ENCODE measurements at regions of chr6 and their contacts with region 1.

Region 1: DNA sequence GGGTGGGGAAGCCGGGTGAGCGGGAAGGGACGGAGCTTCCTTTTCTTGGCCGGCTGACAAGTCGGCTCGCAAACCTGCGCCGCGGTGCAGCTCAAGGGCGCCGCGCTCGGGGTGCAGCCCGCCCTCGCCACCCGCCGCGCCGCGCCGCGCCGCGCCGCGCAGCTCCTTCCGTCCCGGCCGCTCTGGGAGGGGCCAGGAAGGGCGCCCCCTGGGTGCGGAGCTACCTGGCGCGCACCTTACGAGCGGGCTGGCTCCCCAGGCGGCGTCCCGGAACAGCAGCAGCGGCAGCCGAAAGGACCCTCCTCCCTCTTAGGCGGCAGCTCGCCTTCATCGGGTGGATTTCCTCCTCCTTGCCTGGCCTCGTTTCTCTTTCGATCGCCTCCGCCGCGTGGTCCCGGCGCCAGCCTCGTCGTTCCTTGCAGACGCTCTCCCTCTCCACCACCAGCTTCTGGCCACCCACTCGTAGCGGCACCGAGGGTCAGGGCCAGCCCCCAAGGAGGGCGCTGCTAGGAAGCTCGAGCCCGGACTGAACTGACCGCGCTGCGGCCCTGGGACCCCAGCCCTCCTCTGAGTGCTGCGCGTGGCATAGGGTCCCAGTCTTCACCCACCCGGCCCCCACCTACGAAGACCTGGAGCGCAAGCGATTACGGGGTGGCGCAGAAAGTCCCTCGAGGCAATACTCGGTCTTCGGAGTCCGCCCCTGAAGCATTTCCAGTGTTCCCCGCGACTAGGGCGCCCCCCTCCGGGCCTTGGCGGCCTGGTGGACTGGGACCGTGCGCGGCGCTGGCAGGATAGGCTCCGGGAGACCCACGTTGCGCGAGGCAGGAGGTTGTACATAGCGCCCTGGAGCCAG is at the start of gene MAP3K5:
- DNase-seq: peak; percentile 97
- H3K4me3 Mint-ChIP-seq: peak within 1 kb of the TSS; percentile 94
- H3K27ac Mint-ChIP-seq: peak within 1 kb of the TSS; percentile 94
- H3K4me1 Mint-ChIP-seq: peaks cover 35% of the 10 kb centered on the region
- H3K27me3 Mint-ChIP-seq: no peaks in the 10 kb centered on the region
- total RNA-seq, gene MAP3K5: 13.2 to 13.8 TPM

Region 2: DNA sequence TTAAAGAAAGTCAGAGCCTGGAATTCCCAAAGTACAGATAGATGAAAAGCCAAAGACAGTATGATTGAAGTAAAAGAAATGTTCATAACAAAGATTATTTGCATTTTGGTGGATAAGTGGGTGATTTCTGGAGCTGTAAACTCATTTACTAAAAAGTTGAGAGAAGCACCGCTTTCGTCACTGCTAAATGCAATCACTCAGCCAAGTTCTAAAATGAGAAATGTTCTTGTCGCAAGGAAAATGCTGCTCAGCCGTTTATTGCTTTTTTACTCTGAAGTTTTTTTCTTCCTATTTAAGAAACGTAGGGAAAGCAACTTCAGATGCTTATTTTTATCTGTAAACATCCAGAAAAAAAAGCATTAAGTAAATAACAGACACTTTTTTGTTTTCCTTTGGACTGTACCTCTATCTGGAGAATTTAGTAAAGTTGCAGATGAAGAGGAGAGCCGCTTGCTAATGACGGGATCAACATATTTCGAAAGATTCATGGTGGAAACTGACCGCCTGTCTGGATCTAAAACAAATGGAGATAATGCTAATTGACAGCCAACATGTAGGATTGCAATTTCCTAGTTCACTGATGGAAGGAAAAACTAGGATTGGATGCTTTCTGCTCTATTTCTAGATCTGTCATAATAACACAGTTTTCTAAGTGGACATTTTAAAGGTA is 409.2 kb before region 1 on chr6:
- CTCF ChIA-PET with region 1: no interaction called
- POLR2A ChIA-PET with region 1: no interaction called
- intact Hi-C with region 1: no loop called
- DNase-seq: no peak
- H3K4me3 Mint-ChIP-seq: no peak overlapping the region
- H3K27ac Mint-ChIP-seq: no peak overlapping the region
- H3K4me1 Mint-ChIP-seq: no peaks in the 10 kb centered on the region
- H3K27me3 Mint-ChIP-seq: no peaks in the 10 kb centered on the region

Region 3: GRCh38 chr6:136582711-136583471 is 209.7 kb before region 1 on chr6:
- CTCF ChIA-PET with region 1: interaction called, 18 read pairs
- POLR2A ChIA-PET with region 1: no interaction called
- intact Hi-C with region 1: loop called (anchors 1 kb)
- DNase-seq: no peak
- H3K4me3 Mint-ChIP-seq: no peak overlapping the region
- H3K27ac Mint-ChIP-seq: no peak overlapping the region
- H3K4me1 Mint-ChIP-seq: no peaks in the 10 kb centered on the region
- H3K27me3 Mint-ChIP-seq: no peaks in the 10 kb centered on the region

Region 4: GRCh38 chr6:136613477-136613876 is 179.2 kb before region 1 on chr6:
- CTCF ChIA-PET with region 1: interaction called, 29 read pairs
- POLR2A ChIA-PET with region 1: interaction called, 4 read pairs
- intact Hi-C with region 1: loop called (anchors 1 kb)
- DNase-seq: no peak
- H3K4me3 Mint-ChIP-seq: no peak overlapping the region
- H3K27ac Mint-ChIP-seq: no peak overlapping the region
- H3K4me1 Mint-ChIP-seq: peaks cover 10% of the 10 kb centered on the region
- H3K27me3 Mint-ChIP-seq: no peaks in the 10 kb centered on the region

Region 5: DNA sequence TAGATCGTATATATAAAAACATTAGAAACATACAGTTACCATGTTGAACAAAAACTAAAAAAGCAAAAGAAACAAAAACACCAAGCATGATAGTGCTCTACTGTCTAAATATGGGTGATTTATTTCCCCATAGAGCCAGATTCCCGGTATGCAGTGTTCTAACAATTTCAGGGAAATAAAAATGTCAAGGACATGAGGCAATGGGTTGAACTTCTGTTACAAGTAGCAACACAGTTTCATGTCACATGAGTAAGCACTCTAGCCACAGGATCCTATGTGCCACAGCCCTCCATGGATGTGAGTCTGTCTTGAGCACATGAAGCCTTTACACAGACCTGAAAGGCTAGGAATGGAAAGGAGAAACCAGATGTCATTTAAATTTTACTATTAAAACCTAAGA is 96.4 kb before region 1 on chr6:
- CTCF ChIA-PET with region 1: interaction called, 28 read pairs
- POLR2A ChIA-PET with region 1: interaction called, 5 read pairs
- intact Hi-C with region 1: loop called (anchors 1 kb)
- DNase-seq: no peak
- H3K4me3 Mint-ChIP-seq: no peak overlapping the region
- H3K27ac Mint-ChIP-seq: no peak overlapping the region
- H3K4me1 Mint-ChIP-seq: peaks cover 18% of the 10 kb centered on the region
- H3K27me3 Mint-ChIP-seq: no peaks in the 10 kb centered on the region

Region 6: DNA sequence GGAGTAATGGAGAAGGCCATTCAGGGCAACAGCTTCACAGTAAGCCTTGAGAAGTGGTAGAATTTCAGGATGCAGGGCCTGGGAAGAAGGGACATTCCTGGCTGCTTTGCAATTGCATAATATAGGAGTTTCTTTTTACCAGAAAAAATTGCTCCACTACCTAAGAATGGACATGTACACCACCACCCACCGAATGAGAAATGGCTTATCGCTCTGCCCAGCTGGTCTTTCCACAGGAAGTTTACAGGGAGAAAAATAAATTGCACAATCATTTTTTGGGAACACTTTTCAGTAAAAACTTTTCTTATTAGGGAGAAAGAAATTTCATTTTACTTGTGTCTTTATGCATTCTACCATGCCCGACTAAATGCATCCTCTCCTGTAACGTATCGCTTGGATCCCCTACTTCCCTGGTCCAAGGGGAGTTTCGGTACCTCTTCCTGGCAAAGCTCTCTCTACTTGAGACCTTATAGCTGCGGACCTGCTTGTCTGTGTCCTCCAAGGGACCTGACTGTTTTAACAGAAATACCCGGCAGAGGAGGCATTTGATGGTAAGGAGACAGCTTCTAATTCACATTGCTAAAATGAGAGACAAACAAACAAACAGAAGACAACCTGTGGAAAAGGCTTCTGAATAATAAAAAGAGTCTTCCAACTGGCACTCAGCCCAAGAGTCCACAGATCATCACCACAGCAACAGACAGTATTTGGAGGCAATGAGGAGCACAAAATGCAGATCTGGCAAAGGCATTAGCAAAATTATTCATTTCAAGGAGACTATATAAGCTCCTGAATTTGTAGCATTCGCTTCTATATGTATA is 54.6 kb before region 1 on chr6:
- CTCF ChIA-PET with region 1: interaction called, 31 read pairs
- POLR2A ChIA-PET with region 1: interaction called, 6 read pairs
- intact Hi-C with region 1: no loop called
- DNase-seq: no peak
- H3K4me3 Mint-ChIP-seq: no peak overlapping the region
- H3K27ac Mint-ChIP-seq: no peak overlapping the region
- H3K4me1 Mint-ChIP-seq: peaks cover 29% of the 10 kb centered on the region
- H3K27me3 Mint-ChIP-seq: no peaks in the 10 kb centered on the region

Region 7: DNA sequence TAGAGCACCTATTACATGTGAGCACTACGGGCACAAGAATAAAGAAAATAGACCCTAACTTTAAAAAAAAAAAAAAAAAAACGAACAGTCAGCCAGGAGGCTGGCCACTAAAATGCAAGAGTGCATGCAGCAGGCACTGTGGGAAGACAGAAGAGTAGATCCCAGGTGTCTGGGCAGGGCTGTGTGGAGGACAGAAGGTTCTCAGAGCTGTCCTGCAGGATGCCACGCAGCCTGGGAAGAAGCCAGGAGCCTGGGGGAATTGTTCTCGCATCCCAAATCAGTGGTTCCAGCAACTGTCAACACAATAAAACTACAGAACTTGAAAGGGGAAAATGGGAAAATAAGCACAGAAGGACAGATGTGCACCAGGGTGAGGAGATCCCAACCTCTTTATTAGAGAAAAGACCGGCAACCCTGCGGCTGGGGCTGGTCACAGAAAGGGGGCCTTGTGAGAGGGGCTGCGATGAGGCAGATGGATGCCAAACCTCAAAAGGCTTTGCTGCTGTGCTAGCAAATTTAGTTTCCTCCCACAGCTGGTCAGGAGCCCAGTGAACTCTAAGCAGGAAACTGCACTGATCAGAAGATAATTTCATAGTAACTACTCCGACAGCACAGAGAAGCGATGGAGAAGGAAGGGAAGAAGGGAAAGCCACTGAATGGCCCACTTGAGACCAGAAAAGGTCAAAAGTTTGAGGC is 31.3 kb before region 1 on chr6:
- CTCF ChIA-PET with region 1: interaction called, 76 read pairs
- POLR2A ChIA-PET with region 1: interaction called, 13 read pairs
- intact Hi-C with region 1: no loop called
- DNase-seq: no peak
- H3K4me3 Mint-ChIP-seq: peak overlapping the region; percentile 36
- H3K27ac Mint-ChIP-seq: peak overlapping the region; percentile 63
- H3K4me1 Mint-ChIP-seq: peaks cover 66% of the 10 kb centered on the region
- H3K27me3 Mint-ChIP-seq: no peaks in the 10 kb centered on the region

Region 8: GRCh38 chr6:136803608-136804007 is 11.0 kb after region 1 on chr6:
- CTCF ChIA-PET with region 1: interaction called, 16 read pairs
- POLR2A ChIA-PET with region 1: no interaction called
- intact Hi-C with region 1: no loop called
- DNase-seq: no peak
- H3K4me3 Mint-ChIP-seq: no peak overlapping the region
- H3K27ac Mint-ChIP-seq: no peak overlapping the region
- H3K4me1 Mint-ChIP-seq: no peaks in the 10 kb centered on the region
- H3K27me3 Mint-ChIP-seq: peaks cover 5% of the 10 kb centered on the region

Region 9: GRCh38 chr6:136967876-136968752 is 175.5 kb after region 1 on chr6:
- CTCF ChIA-PET with region 1: no interaction called
- POLR2A ChIA-PET with region 1: no interaction called
- intact Hi-C with region 1: no loop called
- DNase-seq: peak; percentile 79
- H3K4me3 Mint-ChIP-seq: no peak overlapping the region
- H3K27ac Mint-ChIP-seq: no peak overlapping the region
- H3K4me1 Mint-ChIP-seq: peaks cover 4% of the 10 kb centered on the region
- H3K27me3 Mint-ChIP-seq: peaks cover 21% of the 10 kb centered on the region